ENCODE measurements at regions of chr19 and their contacts with region 1.

Region 1: GRCh38 chr19:3146677-3147100 is 10.9 kb downstream of the GNA15 start:
- DNase-seq: peak; percentile 69
- ATAC-seq: peak; percentile 60
- H3K4me3 Mint-ChIP-seq: no peak overlapping the region
- H3K27ac Mint-ChIP-seq: peak overlapping the region; percentile 61
- H3K4me1 Mint-ChIP-seq: peaks cover 37% of the 10 kb centered on the region
- H3K27me3 Mint-ChIP-seq: no peaks in the 10 kb centered on the region

Region 2: GRCh38 chr19:3035542-3036118 is 111.1 kb before region 1 on chr19:
- CTCF ChIA-PET with region 1: no interaction called
- POLR2A ChIA-PET with region 1: no interaction called
- DNase-seq: peak; percentile 98
- ATAC-seq: peak; percentile 94
- H3K4me3 Mint-ChIP-seq: peak overlapping the region; percentile 87
- H3K27ac Mint-ChIP-seq: peak overlapping the region; percentile 95
- H3K4me1 Mint-ChIP-seq: peaks cover 30% of the 10 kb centered on the region
- H3K27me3 Mint-ChIP-seq: peaks cover 30% of the 10 kb centered on the region

Region 3: DNA sequence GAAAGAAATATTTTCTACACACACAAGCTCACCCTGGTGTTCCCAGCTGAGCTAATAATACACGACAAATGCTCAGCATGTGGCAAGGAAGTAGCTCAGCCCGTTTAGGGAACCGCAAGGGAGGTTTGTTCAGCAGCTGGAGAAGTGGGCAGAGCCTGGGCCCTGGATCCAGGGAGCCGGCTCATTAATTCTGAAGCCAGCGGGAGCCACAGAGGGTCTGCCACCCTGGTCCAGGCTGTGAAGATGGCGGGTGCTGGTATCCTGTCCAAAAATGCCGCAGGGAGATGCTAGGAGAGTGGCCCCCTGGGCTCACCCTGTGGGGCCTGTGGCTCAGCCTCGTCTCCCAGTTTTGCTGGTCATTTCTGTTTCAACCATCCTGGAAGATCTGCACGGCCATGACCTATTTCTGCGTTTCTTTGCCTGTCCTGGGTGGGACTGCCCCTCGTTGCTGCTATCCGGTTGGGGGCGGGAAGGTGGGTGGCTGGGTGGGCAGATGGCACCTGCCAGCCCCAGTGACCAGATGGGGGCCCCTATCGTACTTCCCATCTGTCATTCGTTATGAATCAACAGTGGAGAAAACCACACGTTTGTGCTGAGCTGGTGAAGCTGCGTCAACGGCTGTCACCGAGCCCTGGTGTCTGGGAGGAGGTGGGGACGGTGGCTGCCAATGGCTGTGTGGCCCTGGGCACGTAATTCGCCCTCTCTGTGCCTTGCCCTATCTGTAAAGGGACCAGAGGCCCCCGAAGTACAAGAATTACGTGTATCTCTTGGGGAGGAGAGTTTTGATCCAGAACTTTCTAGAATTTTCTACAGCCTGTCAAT is 13.5 kb before region 1 on chr19:
- CTCF ChIA-PET with region 1: interaction called, 64 read pairs
- POLR2A ChIA-PET with region 1: interaction called, 3 read pairs
- DNase-seq: peak; percentile 86
- ATAC-seq: peak; percentile 92
- H3K4me3 Mint-ChIP-seq: peak overlapping the region; percentile 66
- H3K27ac Mint-ChIP-seq: peak overlapping the region; percentile 97
- H3K4me1 Mint-ChIP-seq: peaks cover 52% of the 10 kb centered on the region
- H3K27me3 Mint-ChIP-seq: no peaks in the 10 kb centered on the region

Region 4: GRCh38 chr19:3163230-3163886 is 16.7 kb after region 1 on chr19:
- CTCF ChIA-PET with region 1: interaction called, 12 read pairs
- POLR2A ChIA-PET with region 1: no interaction called
- DNase-seq: peak; percentile 78
- ATAC-seq: peak; percentile 91
- H3K4me3 Mint-ChIP-seq: no peak overlapping the region
- H3K27ac Mint-ChIP-seq: peak overlapping the region; percentile 67
- H3K4me1 Mint-ChIP-seq: peaks cover 52% of the 10 kb centered on the region
- H3K27me3 Mint-ChIP-seq: no peaks in the 10 kb centered on the region

Measured in activated CD8-positive, alpha-beta T cell treated with anti-CD3 and anti-CD28 coated beads, Interleukin-2, amount 10 ng/mL, durations not matched to agents 7 days and 5 days (primary cell).